HEK293T (cell line): ENCODE measurements at regions of chr10 and their contacts with region 1.

Region 1: DNA sequence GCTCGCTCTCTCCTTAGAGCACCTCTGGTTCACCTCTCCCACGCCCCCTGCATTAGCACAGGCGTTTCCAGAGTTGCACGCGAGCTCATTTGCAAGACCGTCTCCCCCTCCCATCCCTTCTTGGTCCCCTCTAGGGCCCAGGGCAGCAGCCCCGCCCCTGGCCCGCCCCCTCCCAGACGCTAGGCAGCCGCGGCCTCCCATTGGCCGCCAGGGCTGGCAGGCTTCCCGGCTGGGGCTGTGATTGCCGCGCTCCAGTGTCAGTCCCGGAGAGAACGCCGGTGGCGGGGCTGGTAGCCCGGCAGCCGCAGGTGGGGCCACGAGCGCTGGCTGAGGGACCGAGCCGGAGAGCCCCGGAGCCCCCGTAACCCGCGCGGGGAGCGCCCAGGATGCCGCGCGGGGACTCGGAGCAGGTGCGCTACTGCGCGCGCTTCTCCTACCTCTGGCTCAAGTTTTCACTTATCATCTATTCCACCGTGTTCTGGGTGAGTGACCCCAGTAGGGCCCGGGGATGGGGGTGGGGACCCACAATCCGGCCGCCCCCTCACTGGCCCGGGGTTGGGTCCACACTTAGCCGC is at the start of gene TSPAN15:
- DNase-seq: peak; percentile 94

Region 2: DNA sequence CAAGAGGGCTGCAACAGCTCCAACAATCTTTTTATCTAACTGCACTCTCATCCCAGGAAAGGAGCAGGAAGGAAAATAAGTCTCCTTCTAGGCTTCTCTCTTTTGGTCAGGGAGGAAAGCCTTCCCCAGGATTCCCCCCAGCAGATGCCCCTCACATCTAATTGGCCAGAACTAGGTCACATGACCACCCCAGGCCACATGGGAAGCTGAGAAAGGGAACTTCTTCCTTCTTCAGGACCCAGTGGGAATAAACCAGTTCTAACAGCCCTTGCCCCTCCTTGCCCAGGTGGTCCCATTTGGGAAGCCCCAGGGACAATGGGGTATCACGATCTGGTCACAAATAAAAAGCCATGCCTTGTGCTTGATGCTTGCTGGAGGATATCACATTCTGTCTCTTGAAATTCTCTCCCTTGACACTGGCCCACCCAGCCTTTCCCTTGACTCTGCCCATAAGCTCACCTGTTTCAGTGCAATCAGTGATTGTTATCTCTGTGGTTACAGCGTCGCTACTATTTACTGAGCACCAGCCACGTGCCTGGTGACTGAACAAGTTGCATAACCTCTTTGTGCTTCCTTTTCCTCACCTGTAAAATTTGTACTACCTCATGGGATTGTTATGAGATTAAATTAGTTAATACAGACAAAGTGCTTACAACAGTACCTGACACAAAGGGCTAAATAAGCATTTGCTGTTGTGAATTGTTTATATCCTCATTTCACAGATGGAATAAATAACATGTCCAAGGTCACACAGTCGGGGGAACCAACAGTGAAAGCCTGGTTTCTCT is 25.6 kb before region 1 on chr10:
- CTCF ChIA-PET with region 1: interaction called, 11 read pairs
- POLR2A ChIA-PET with region 1: no interaction called
- DNase-seq: no peak